Endothelial cell of umbilical vein (primary cell): ENCODE measurements at regions of chr7 and their contacts with region 1.

Region 1: DNA sequence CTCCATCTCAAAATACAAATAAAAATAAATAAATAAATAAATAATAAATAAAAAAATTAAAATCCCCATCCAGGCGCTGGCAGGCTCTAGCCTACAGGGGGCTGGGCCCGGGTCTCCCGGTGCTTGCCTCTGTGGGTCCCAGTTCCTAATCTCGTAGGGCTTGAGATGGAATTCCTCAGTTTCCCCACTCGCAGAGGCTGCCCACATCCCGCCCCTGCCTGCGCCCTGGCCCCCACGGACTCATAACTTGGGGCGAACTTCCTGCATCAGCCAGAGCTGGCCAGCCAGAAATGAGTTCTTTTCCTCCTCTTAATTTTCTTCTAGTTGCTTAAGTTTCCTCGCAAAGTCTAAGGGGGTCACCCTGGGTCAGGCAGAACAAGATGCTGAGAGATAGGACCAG is 22.0 kb upstream of the SRRM3 start:
- DNase-seq: no peak
- H3K4me3 ChIP-seq: no peak overlapping the region
- H3K27ac ChIP-seq: no peak overlapping the region
- H3K4me1 ChIP-seq: no peaks in the 10 kb centered on the region
- H3K27me3 ChIP-seq: no peaks in the 10 kb centered on the region
- CTCF ChIP-seq: no peak
- POLR2A ChIP-seq: no peak

Region 2: DNA sequence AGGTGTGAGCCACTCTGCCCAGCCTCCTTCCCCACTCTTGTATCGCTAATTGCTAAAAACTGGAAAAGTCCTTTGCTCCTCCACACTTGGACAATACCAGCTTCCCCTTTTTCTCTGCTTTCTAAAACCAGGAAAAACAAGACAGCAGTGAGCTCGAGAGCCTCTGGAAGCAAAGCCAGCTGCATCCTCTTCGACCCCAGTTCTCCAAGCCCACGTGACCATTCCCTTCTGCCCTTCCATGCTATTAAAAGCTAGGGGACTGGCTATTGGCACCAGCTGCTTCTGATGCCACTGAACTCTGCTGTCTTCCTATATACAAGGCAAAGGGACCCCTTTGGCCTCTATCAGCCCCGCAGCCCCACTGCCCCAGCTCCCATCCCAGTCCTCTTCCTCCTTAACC is 595.3 kb before region 1 on chr7:
- CTCF ChIA-PET with region 1: no interaction called
- POLR2A ChIA-PET with region 1: no interaction called
- dilution Hi-C with region 1: no loop called
- intact Hi-C with region 1: no loop called
- DNase-seq: peak; percentile 31
- H3K4me3 ChIP-seq: no peak overlapping the region
- H3K27ac ChIP-seq: no peak overlapping the region
- H3K4me1 ChIP-seq: no peaks in the 10 kb centered on the region
- H3K27me3 ChIP-seq: no peaks in the 10 kb centered on the region
- CTCF ChIP-seq: no peak
- POLR2A ChIP-seq: no peak

Region 3: GRCh38 chr7:75928331-75928909 is 251.3 kb before region 1 on chr7:
- CTCF ChIA-PET with region 1: no interaction called
- POLR2A ChIA-PET with region 1: no interaction called
- dilution Hi-C with region 1: no loop called
- intact Hi-C with region 1: no loop called
- DNase-seq: no peak
- H3K4me3 ChIP-seq: no peak overlapping the region
- H3K27ac ChIP-seq: no peak overlapping the region
- H3K4me1 ChIP-seq: no peaks in the 10 kb centered on the region
- H3K27me3 ChIP-seq: no peaks in the 10 kb centered on the region
- CTCF ChIP-seq: no peak
- POLR2A ChIP-seq: no peak

Region 4: GRCh38 chr7:76122516-76123239 is 57.0 kb before region 1 on chr7:
- CTCF ChIA-PET with region 1: no interaction called
- POLR2A ChIA-PET with region 1: no interaction called
- dilution Hi-C with region 1: no loop called
- intact Hi-C with region 1: no loop called
- DNase-seq: peak; percentile 78
- H3K4me3 ChIP-seq: no peak overlapping the region
- H3K27ac ChIP-seq: peak overlapping the region; percentile 23
- H3K4me1 ChIP-seq: peaks cover 6% of the 10 kb centered on the region
- H3K27me3 ChIP-seq: no peaks in the 10 kb centered on the region
- CTCF ChIP-seq: no peak
- POLR2A ChIP-seq: no peak

Region 5: GRCh38 chr7:76282344-76283253 is 102.9 kb after region 1 on chr7:
- CTCF ChIA-PET with region 1: interaction called, 14 read pairs
- POLR2A ChIA-PET with region 1: no interaction called
- dilution Hi-C with region 1: no loop called
- intact Hi-C with region 1: no loop called
- DNase-seq: no peak
- H3K4me3 ChIP-seq: peak overlapping the region in 2 of 3 experiments; percentile 29 to 42
- H3K27ac ChIP-seq: no peak overlapping the region
- H3K4me1 ChIP-seq: no peaks in the 10 kb centered on the region
- H3K27me3 ChIP-seq: peaks cover 14 to 23% of the 10 kb centered on the region in 2 experiments
- CTCF ChIP-seq: no peak
- POLR2A ChIP-seq: no peak